Calu3 (cell line): ENCODE measurements at regions of chr1 and their contacts with region 1.

Region 1: GRCh38 chr1:204162231-204163074 is 3.7 kb downstream of the REN start:
- DNase-seq: peak; percentile 94
- H3K4me3 Mint-ChIP-seq: no peak overlapping the region
- H3K27ac Mint-ChIP-seq: no peak overlapping the region
- H3K4me1 Mint-ChIP-seq: no peaks in the 10 kb centered on the region
- H3K27me3 Mint-ChIP-seq: peaks cover 16% of the 10 kb centered on the region
- CTCF ChIP-seq: peak; percentile 99

Region 2: GRCh38 chr1:203861379-203862184 is 300.9 kb before region 1 on chr1 and contains the start of gene SNRPE:
- CTCF ChIA-PET with region 1: interaction called, 20 read pairs
- intact Hi-C with region 1: loop called (anchors 1 kb)
- DNase-seq: peak; percentile 98
- H3K4me3 Mint-ChIP-seq: peak within 1 kb of the TSS; percentile 99
- H3K27ac Mint-ChIP-seq: peak within 1 kb of the TSS; percentile 98
- H3K4me1 Mint-ChIP-seq: peaks cover 22% of the 10 kb centered on the region
- H3K27me3 Mint-ChIP-seq: no peaks in the 10 kb centered on the region
- CTCF ChIP-seq: peak; percentile 90
- total RNA-seq, gene SNRPE: 195 and 224 TPM in 2 replicates

Region 3: DNA sequence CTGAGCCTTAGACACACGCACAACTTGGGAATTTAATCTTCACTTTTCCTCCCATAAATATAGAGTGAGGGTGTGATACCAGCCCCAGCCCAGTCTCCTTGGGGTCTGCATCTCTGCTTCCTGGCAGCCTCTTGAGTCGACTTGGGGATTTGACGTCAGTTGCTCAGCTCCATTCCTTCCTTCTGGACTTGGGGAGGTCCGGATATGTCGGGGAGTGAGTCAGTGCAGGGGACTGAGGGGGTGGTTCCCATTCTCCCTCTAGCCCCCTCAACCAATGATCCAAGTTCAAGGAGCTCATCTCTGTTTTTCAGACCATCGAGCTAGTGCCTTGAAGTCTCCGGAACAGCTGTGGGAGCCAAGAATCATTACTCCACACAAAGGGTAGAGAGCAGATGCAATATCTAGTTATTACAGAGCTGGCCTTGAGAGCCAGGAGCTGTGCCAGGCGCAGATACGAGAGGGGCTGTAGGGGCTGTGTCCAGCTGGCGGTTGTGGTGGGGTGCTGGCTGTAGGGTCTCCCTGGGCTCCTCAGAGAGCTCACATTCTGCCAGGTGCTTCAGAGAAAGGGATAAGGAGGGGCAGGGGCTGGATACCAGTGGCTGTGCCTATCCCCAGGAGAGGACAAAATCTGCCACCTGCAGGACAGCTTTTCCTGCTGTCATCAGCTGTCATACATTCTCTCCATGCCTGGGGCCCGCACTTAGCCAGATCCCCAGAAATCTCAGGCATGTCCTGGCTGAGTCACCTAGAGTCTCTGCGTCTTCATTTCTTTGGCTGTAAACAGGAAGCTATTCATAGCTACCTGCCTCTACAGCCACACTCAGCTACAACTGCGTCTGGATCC is 35.9 kb after region 1 on chr1:
- CTCF ChIA-PET with region 1: interaction called, 58 read pairs
- intact Hi-C with region 1: loop called (anchors 1 kb)
- DNase-seq: peak; percentile 81
- H3K4me3 Mint-ChIP-seq: no peak overlapping the region
- H3K27ac Mint-ChIP-seq: no peak overlapping the region
- H3K4me1 Mint-ChIP-seq: peaks cover 31% of the 10 kb centered on the region
- H3K27me3 Mint-ChIP-seq: peaks cover 2% of the 10 kb centered on the region
- CTCF ChIP-seq: peak; percentile 32

Region 4: GRCh38 chr1:204207136-204207616 is 44.7 kb after region 1 on chr1:
- CTCF ChIA-PET with region 1: interaction called, 35 read pairs
- intact Hi-C with region 1: loop called (anchors 1 kb)
- DNase-seq: peak; percentile 87
- H3K4me3 Mint-ChIP-seq: no peak overlapping the region
- H3K27ac Mint-ChIP-seq: no peak overlapping the region
- H3K4me1 Mint-ChIP-seq: peaks cover 37% of the 10 kb centered on the region
- H3K27me3 Mint-ChIP-seq: no peaks in the 10 kb centered on the region
- CTCF ChIP-seq: peak; percentile 88

Region 5: DNA sequence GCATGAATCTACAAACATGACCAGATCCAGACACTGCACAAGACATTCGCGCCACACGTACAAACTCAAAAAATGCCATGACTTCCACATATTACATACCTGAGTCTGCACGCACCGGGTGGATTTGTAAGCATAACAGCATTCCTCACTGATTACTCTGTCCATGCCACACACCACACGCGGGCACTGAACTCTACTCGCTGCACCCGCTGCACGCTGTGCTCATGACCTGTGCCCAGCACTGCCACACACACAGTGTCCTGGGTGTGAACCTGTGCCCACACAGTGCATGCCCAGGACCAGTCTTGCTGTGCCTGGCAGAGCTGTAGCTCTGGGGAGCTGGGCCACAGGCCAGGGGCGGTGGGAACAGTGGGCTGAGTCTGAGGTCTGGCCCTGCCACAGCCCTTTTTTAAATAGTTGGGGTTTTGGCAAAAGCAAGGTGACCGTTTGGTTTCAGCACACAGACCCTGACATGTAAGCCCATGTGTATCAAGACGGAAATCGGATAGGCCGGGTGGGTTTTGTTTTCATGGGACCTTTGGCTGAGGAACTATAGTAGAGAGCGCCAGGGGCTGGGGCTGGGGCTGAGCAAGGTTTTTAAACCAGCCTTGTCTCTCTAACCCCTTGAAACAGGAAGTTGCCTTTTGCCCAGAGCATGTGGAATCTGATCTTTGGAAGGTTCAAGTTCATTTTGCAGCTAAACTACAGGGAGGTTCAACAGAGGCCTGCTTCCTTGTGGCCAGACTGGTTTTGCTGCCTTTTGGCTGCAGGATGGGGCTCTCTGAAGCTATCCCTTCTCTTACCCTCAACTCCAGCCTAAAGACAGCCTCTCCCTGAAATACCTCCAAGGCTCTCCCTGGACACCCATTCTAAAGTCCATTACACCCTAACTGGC is 63.6 kb after region 1 on chr1:
- CTCF ChIA-PET with region 1: interaction called, 14 read pairs
- intact Hi-C with region 1: no loop called
- DNase-seq: peak; percentile 71
- H3K4me3 Mint-ChIP-seq: no peak overlapping the region
- H3K27ac Mint-ChIP-seq: no peak overlapping the region
- H3K4me1 Mint-ChIP-seq: no peaks in the 10 kb centered on the region
- H3K27me3 Mint-ChIP-seq: no peaks in the 10 kb centered on the region
- CTCF ChIP-seq: no peak

Region 6: GRCh38 chr1:204307334-204307883 is 145.0 kb after region 1 on chr1:
- CTCF ChIA-PET with region 1: no interaction called
- intact Hi-C with region 1: no loop called
- DNase-seq: no peak
- H3K4me3 Mint-ChIP-seq: no peak overlapping the region
- H3K27ac Mint-ChIP-seq: no peak overlapping the region
- H3K4me1 Mint-ChIP-seq: peaks cover 38% of the 10 kb centered on the region
- H3K27me3 Mint-ChIP-seq: no peaks in the 10 kb centered on the region
- CTCF ChIP-seq: no peak

Region 7: DNA sequence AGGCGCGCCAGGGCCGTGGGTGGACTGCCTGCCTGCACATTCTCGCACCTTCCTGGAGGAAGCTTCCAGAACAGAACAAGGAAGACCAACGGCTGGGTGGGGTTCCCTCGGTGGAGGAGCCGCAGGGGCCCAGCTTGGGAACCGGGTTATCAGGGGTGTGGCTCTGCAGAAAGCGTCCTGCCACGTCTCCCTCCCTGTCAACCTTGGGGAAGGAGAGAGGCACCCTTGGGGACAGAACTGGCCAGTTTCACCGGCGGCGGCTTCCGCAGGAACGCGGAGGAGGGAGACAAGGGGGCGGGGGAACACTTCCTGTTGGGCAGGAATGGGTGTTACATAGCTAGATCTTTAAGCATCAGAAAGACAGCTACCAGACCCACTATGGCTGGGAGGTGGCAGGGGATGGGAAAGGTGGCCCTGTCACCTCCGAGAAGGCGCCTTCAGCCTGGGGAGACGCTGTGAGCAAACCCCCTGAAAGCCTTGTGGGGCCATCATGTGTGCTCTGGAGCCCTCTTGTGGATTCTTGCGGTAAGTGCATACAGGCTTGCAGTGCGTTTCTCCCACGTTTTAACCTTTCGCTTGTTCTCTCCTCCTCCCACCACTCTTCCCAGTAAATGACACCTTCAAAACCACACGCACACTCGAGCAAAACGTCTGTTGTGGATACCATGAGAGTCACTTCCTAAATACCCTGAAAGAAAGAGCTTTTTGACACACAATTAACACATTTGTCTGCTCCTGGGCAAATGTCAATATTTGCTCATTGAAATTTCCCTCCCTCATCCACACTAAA is 201.1 kb after region 1 on chr1:
- CTCF ChIA-PET with region 1: interaction called, 14 read pairs
- intact Hi-C with region 1: loop called (anchors 1 kb)
- DNase-seq: peak; percentile 73
- H3K4me3 Mint-ChIP-seq: peak overlapping the region; percentile 44
- H3K27ac Mint-ChIP-seq: peak overlapping the region; percentile 8
- H3K4me1 Mint-ChIP-seq: peaks cover 34% of the 10 kb centered on the region
- H3K27me3 Mint-ChIP-seq: no peaks in the 10 kb centered on the region
- CTCF ChIP-seq: peak; percentile 98

Region 8: GRCh38 chr1:204390751-204391466 is 228.5 kb after region 1 on chr1:
- CTCF ChIA-PET with region 1: no interaction called
- intact Hi-C with region 1: no loop called
- DNase-seq: no peak
- H3K4me3 Mint-ChIP-seq: no peak overlapping the region
- H3K27ac Mint-ChIP-seq: no peak overlapping the region
- H3K4me1 Mint-ChIP-seq: no peaks in the 10 kb centered on the region
- H3K27me3 Mint-ChIP-seq: no peaks in the 10 kb centered on the region
- CTCF ChIP-seq: no peak